ENCODE measurements at regions of chr19 and their contacts with region 1.

Region 1: GRCh38 chr19:56314562-56315077 is at the start of gene ZSCAN5A:
- DNase-seq: peak; percentile 93 to 99 (median 96)
- ATAC-seq: peak; percentile 76
- H3K4me3 ChIP-seq: peak within 1 kb of the TSS; percentile 76
- H3K4me3 Mint-ChIP-seq: peak within 1 kb of the TSS; percentile 91
- H3K27ac ChIP-seq: peak within 1 kb of the TSS; percentile 93 to 99
- H3K27ac Mint-ChIP-seq: peak within 1 kb of the TSS; percentile 95
- H3K4me1 ChIP-seq: peaks cover 14% of the 10 kb centered on the region
- H3K4me1 Mint-ChIP-seq: peaks cover 34% of the 10 kb centered on the region
- H3K27me3 ChIP-seq: no peaks in the 10 kb centered on the region
- H3K27me3 Mint-ChIP-seq: no peaks in the 10 kb centered on the region
- CTCF ChIP-seq: no peak
- total RNA-seq, gene ZSCAN5A: 3.3 to 4.4 TPM

Region 2: DNA sequence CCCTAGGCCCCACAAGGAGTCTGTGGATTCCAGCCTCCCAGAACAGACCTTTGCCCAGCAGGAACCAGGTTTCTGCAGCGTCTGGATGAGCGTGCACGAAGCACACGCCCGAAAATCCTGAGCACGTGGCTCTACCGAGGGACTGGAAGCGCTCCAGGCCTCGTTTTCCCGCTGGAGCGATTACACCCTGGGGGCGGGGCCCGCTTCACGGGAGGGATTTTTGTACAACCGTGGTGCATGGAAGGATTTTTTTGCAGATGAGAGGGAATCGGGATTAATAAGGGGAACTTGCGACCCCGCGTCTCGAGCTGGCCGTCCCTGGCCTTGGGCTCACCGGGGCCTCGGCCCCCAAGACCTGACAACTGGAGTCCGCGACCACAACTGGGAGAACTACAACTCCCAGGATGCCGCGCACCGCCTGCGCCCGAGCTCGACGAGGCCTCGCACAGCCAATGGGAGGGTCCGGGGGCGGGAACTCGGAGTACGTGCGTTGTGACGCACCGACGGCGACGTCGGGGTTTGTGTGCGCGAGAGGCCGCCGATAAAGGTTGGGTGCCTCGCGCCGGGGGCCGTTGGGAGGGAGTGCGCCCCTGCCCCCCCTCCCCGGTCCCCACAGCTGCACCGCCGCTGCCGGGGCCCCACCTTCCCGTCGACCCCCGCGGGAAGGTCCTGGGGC is 838.4 kb before region 1 on chr19 and contains the start of gene ZNF628:
- CTCF ChIA-PET with region 1: no interaction called
- POLR2A ChIA-PET with region 1: no interaction called
- intact Hi-C with region 1: loop called in 1 of 2 experiments (anchors 10 kb)
- DNase-seq: peak; percentile 94 to 99 (median 98)
- ATAC-seq: peak; percentile 93
- H3K4me3 ChIP-seq: peak within 1 kb of the TSS; percentile 76
- H3K4me3 Mint-ChIP-seq: peak within 1 kb of the TSS; percentile 91
- H3K27ac ChIP-seq: peak within 1 kb of the TSS; percentile 72 to 77
- H3K27ac Mint-ChIP-seq: peak within 1 kb of the TSS; percentile 93
- H3K4me1 ChIP-seq: peaks cover 26% of the 10 kb centered on the region
- H3K4me1 Mint-ChIP-seq: peaks cover 38% of the 10 kb centered on the region
- H3K27me3 ChIP-seq: no peaks in the 10 kb centered on the region
- H3K27me3 Mint-ChIP-seq: no peaks in the 10 kb centered on the region
- CTCF ChIP-seq: no peak
- total RNA-seq, gene ZNF628: 26.6 to 27.2 TPM

Region 3: GRCh38 chr19:56121180-56122167 is 193.1 kb before region 1 on chr19 and contains the start of gene ZNF787:
- CTCF ChIA-PET with region 1: no interaction called
- POLR2A ChIA-PET with region 1: interaction called, 5 read pairs
- intact Hi-C with region 1: loop called in 1 of 2 experiments (anchors 1 kb)
- DNase-seq: peak; percentile 93 to 99 (median 97)
- ATAC-seq: peak; percentile 84
- H3K4me3 ChIP-seq: peak within 1 kb of the TSS; percentile 73
- H3K4me3 Mint-ChIP-seq: peak within 1 kb of the TSS; percentile 98
- H3K27ac ChIP-seq: peak within 1 kb of the TSS; percentile 92 to 98
- H3K27ac Mint-ChIP-seq: peak within 1 kb of the TSS; percentile 96
- H3K4me1 ChIP-seq: peaks cover 52% of the 10 kb centered on the region
- H3K4me1 Mint-ChIP-seq: peaks cover 73% of the 10 kb centered on the region
- H3K27me3 ChIP-seq: no peaks in the 10 kb centered on the region
- H3K27me3 Mint-ChIP-seq: no peaks in the 10 kb centered on the region
- CTCF ChIP-seq: no peak
- total RNA-seq, gene ZNF787: 11.4 to 11.5 TPM

Region 4: GRCh38 chr19:56356944-56357343 is 42.3 kb after region 1 on chr19:
- CTCF ChIA-PET with region 1: no interaction called
- POLR2A ChIA-PET with region 1: no interaction called
- intact Hi-C with region 1: no loop called
- DNase-seq: no peak
- ATAC-seq: no peak
- H3K4me3 ChIP-seq: no peak overlapping the region
- H3K4me3 Mint-ChIP-seq: no peak overlapping the region
- H3K27ac ChIP-seq: no peak overlapping the region
- H3K27ac Mint-ChIP-seq: no peak overlapping the region
- H3K4me1 ChIP-seq: no peaks in the 10 kb centered on the region
- H3K4me1 Mint-ChIP-seq: no peaks in the 10 kb centered on the region
- H3K27me3 ChIP-seq: no peaks in the 10 kb centered on the region
- H3K27me3 Mint-ChIP-seq: no peaks in the 10 kb centered on the region
- CTCF ChIP-seq: no peak

Region 5: DNA sequence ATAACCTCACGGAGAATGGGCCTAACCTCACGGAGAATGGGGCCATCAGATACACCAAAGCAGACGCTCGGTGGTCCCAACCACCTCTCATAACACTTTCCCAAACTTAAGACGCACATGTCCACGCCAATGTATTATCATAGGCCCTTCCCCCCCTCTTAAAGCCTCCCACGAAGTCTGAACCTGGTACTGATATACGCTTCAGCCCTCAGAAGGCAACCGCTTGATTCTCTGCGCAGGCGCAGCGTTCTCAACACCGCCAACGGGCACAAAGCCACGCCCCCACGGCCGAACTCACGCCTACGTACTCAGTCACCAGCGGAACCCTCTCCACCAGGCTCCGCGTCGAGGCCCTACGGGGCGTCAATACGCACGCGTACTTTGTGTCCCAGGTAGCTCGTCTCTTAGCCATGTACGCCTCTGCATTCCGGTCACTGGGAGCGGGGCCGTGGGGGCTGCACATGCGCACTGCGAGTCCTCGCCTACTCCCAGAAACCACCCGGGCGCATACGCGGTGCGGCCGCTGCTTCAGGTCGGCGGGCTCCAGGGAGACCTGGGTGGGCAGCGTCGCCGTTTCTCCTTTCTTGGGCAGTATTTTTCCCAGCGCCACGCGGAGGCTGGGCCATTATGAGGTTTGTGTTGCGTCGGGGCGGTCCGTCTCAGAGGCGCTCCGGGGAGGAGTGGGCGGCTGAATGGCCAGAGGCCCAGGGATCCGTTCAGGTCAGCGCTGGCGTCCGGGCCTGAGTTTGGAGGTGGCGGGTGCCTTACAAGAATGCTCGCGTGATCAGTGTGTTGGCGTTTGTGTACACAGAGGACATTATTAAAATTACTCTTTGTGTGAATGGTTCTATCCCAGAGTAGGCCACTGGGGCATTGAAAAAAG is 53.5 kb after region 1 on chr19:
- CTCF ChIA-PET with region 1: no interaction called
- POLR2A ChIA-PET with region 1: interaction called, 10 read pairs
- intact Hi-C with region 1: loop called in 1 of 2 experiments (anchors 2 kb)
- DNase-seq: peak; percentile 53 to 90 (median 72)
- ATAC-seq: peak; percentile 91
- H3K4me3 ChIP-seq: peak overlapping the region; percentile 58
- H3K4me3 Mint-ChIP-seq: peak overlapping the region; percentile 95
- H3K27ac ChIP-seq: peak overlapping the region; percentile 8 to 45
- H3K27ac Mint-ChIP-seq: peak overlapping the region; percentile 87
- H3K4me1 ChIP-seq: peaks cover 13% of the 10 kb centered on the region
- H3K4me1 Mint-ChIP-seq: peaks cover 27% of the 10 kb centered on the region
- H3K27me3 ChIP-seq: no peaks in the 10 kb centered on the region
- H3K27me3 Mint-ChIP-seq: no peaks in the 10 kb centered on the region
- CTCF ChIP-seq: no peak

Region 6: GRCh38 chr19:56594783-56595547 is 280.3 kb after region 1 on chr19 and contains the start of gene ZNF71:
- CTCF ChIA-PET with region 1: no interaction called
- POLR2A ChIA-PET with region 1: no interaction called
- intact Hi-C with region 1: loop called in 1 of 2 experiments (anchors 2 kb)
- DNase-seq: peak; percentile 79 to 90 (median 84)
- ATAC-seq: peak; percentile 95
- H3K4me3 ChIP-seq: peak within 1 kb of the TSS; percentile 73
- H3K4me3 Mint-ChIP-seq: peak within 1 kb of the TSS; percentile 92
- H3K27ac ChIP-seq: peak within 1 kb of the TSS; percentile 43 to 62
- H3K27ac Mint-ChIP-seq: peak within 1 kb of the TSS; percentile 79
- H3K4me1 ChIP-seq: peaks cover 19% of the 10 kb centered on the region
- H3K4me1 Mint-ChIP-seq: peaks cover 24% of the 10 kb centered on the region
- H3K27me3 ChIP-seq: no peaks in the 10 kb centered on the region
- H3K27me3 Mint-ChIP-seq: no peaks in the 10 kb centered on the region
- CTCF ChIP-seq: no peak
- total RNA-seq, gene ZNF71: 2.2 TPM

Region 7: GRCh38 chr19:56660381-56661107 is 345.9 kb after region 1 on chr19:
- CTCF ChIA-PET with region 1: no interaction called
- POLR2A ChIA-PET with region 1: no interaction called
- intact Hi-C with region 1: no loop called
- DNase-seq: no peak
- ATAC-seq: no peak
- H3K4me3 ChIP-seq: no peak overlapping the region
- H3K4me3 Mint-ChIP-seq: no peak overlapping the region
- H3K27ac ChIP-seq: no peak overlapping the region
- H3K27ac Mint-ChIP-seq: no peak overlapping the region
- H3K4me1 ChIP-seq: no peaks in the 10 kb centered on the region
- H3K4me1 Mint-ChIP-seq: no peaks in the 10 kb centered on the region
- H3K27me3 ChIP-seq: no peaks in the 10 kb centered on the region
- H3K27me3 Mint-ChIP-seq: no peaks in the 10 kb centered on the region
- CTCF ChIP-seq: no peak

Region 8: DNA sequence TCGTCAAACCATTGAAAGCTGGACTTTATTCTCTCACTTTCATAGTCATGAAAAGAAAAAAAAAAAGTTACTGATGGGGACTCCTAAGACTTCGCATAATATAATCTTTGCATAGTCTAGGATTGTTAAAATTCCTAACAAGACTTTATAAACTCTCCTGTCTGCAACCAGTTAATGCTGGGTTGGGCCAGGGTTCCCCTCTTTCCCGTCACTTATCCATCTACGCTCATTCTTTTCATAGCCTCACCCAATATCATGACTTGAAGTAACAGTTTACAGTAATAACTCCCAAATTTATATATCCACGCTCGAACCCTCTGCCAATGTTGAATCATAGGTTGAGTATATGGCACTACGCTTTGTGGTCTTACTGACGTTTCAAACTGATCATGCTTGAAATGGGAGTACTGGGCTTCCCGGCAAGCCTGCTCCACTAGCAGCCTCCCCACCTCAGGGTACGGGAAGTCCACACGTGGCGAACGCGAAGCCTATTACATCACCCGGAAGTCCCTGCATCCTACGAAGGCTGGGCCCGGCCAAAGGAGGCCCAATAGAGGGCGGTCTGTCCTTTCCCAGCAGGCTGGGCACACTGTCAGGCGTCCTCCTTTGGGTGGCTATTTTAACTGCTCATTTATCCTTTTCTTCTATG is 964.9 kb after region 1 on chr19:
- CTCF ChIA-PET with region 1: no interaction called
- POLR2A ChIA-PET with region 1: no interaction called
- intact Hi-C with region 1: loop called in 1 of 2 experiments (anchors 5 kb)
- DNase-seq: peak; percentile 59 to 93 (median 70)
- ATAC-seq: peak; percentile 66
- H3K4me3 ChIP-seq: peak overlapping the region; percentile 76
- H3K4me3 Mint-ChIP-seq: no peak overlapping the region
- H3K27ac ChIP-seq: peak overlapping the region; percentile 95 to 100
- H3K27ac Mint-ChIP-seq: no peak overlapping the region
- H3K4me1 ChIP-seq: peaks cover 42% of the 10 kb centered on the region
- H3K4me1 Mint-ChIP-seq: peaks cover 27% of the 10 kb centered on the region
- H3K27me3 ChIP-seq: no peaks in the 10 kb centered on the region
- H3K27me3 Mint-ChIP-seq: no peaks in the 10 kb centered on the region
- CTCF ChIP-seq: no peak